Breast epithelium (tissue), 4 donors: ENCODE measurements at regions of chr15 and their contacts with region 1.

Region 1: DNA sequence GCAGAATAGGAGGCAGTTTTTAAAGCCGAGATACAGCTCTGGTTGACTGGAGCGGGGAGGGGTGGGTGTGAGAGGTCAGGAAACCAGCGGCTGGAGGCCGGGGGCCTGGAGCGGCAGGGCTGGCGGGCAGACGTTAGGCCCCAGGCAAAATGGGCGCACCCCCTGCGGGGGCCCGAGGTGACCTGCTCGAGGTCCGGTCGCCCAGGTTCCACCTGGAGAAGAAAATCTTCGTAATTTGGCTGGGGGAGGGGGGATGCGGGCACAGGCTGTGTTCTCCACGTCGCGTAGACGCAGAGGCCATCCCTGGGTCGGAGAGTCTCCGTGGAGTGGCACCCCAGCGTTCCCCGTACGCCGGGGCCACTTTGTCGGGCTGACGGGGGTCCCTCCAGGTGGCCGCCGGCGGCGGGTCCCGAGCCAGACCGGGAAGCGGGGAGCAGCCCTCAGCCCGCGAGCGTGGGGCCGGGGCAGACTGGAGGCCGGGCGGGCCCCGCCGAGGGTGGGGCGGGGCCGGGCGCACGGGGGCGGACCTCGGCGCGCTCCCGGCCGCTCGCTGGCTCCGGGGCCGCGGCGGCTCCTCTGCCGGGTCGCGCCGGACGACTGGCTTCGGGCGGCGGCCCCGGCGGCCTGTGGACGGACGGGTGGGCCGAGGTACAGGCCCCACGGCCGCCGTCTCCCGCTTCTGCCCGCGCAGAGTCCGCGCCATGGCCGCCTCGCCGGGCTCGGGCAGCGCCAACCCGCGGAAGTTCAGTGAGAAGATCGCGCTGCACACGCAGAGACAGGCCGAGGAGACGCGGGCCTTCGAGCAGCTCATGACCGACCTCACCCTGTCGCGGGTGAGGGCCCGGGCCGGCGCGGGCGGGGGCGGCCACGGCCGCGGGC is at the start of gene CRTC3:
- DNase-seq: peak; percentile 20 to 52
- H3K4me3 ChIP-seq: peak within 1 kb of the TSS; percentile 68 to 99 (median 82)
- H3K27ac ChIP-seq: peak within 1 kb of the TSS; percentile 91 to 99
- H3K4me1 ChIP-seq: no peaks in the 10 kb centered on the region
- H3K27me3 ChIP-seq: no peaks in the 10 kb centered on the region
- CTCF ChIP-seq: no peak
- POLR2A ChIP-seq: no peak
- total RNA-seq, gene CRTC3: 29.4 to 40.6 (median 36.2) TPM

Region 2: GRCh38 chr15:89630974-89631901 is 898.4 kb before region 1 on chr15:
- intact Hi-C with region 1: no loop called
- DNase-seq: no peak
- H3K4me3 ChIP-seq: no peak overlapping the region
- H3K27ac ChIP-seq: no peak overlapping the region
- H3K4me1 ChIP-seq: no peaks in the 10 kb centered on the region
- H3K27me3 ChIP-seq: no peaks in the 10 kb centered on the region
- CTCF ChIP-seq: no peak
- POLR2A ChIP-seq: no peak

Region 3: GRCh38 chr15:90598031-90598577 is 68.5 kb after region 1 on chr15:
- intact Hi-C with region 1: loop called (anchors 10 kb)
- DNase-seq: no peak
- H3K4me3 ChIP-seq: no peak overlapping the region
- H3K27ac ChIP-seq: peak overlapping the region; percentile 44 to 61
- H3K4me1 ChIP-seq: no peaks in the 10 kb centered on the region
- H3K27me3 ChIP-seq: no peaks in the 10 kb centered on the region
- CTCF ChIP-seq: no peak
- POLR2A ChIP-seq: no peak

Region 4: DNA sequence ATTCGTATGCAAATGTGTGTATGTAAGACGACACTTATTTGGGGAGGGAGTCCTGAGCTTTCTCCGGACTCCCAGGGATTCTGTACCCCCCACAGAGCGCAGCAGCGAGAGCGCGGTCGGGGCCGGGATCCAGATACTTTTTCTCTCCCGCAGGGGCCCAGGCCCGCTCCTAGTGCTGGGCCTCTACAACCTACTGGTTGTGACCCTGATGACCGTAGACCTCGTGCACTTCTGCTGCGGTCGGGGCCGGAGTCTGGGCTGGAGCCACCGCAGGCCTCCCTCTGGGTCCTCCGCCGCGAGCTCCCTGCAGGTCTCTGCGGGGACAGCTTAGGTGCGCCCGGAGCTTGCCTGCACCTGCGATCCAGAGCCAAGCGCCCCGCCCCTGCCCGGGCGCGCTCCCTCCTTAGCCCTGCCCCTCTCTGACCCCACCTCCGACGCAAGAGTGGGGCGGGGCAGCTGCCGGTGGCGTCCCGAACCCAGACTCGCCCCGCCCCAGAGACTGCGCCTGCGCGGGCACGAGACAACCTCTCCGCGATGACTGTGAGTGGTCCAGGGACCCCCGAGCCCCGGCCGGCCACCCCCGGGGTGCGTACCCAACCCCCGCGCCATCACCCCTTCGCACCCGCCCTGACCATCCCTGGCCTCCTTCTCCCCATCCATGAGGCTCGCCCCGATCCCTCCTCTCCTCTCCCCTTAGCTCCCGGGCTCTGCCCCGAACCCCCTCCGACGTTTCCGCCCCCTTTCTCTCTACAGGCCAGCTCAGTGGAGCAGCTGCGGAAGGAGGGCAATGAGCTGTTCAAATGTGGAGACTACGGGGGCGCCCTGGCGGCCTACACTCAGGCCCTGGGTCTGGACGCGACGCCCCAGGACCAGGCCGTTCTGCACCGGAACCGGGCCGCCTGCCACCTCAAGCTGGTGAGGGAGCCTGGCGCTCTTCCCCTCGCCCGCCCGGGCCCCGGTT is 405.5 kb after region 1 on chr15 and contains the start of gene UNC45A:
- intact Hi-C with region 1: no loop called
- DNase-seq: peak; percentile 87 to 90
- H3K4me3 ChIP-seq: peak within 1 kb of the TSS; percentile 65 to 93 (median 78)
- H3K27ac ChIP-seq: peak within 1 kb of the TSS; percentile 84 to 91
- H3K4me1 ChIP-seq: peaks cover 4 to 14% of the 10 kb centered on the region in 2 donors
- H3K27me3 ChIP-seq: no peaks in the 10 kb centered on the region
- CTCF ChIP-seq: no peak
- POLR2A ChIP-seq: no peak
- total RNA-seq, gene UNC45A: 52.4 to 65.0 (median 59.8) TPM